Heart right ventricle (tissue), 16 donors: ENCODE measurements at regions of chr18 and their contacts with region 1.

Region 1: GRCh38 chr18:76405681-76406356 is 89.2 kb downstream of the ZNF516 start:
- DNase-seq: peak in 1 of 2 donors; percentile 57
- ATAC-seq: peak in 4 of 8 donors; percentile 29 to 54 (median 38)
- H3K4me3 ChIP-seq: no peak overlapping the region
- H3K27ac ChIP-seq: no peak overlapping the region
- H3K4me1 ChIP-seq: peaks cover 0 to 32% (median 9%) of the 10 kb centered on the region in 9 donors
- H3K27me3 ChIP-seq: no peaks in the 10 kb centered on the region
- CTCF ChIP-seq: peak; percentile 5 to 62 (median 43)

Region 2: GRCh38 chr18:76620321-76621170 is 214.7 kb after region 1 on chr18:
- intact Hi-C with region 1: loop called in 1 of 10 experiments (anchors 10 kb)
- DNase-seq: peak; percentile 69
- ATAC-seq: peak; percentile 81 to 91 (median 87)
- H3K4me3 ChIP-seq: peak overlapping the region; percentile 1 to 58 (median 50)
- H3K27ac ChIP-seq: peak overlapping the region in 8 of 10 donors; percentile 2 to 83 (median 64)
- H3K4me1 ChIP-seq: peaks cover 0 to 34% (median 16%) of the 10 kb centered on the region in 9 donors
- H3K27me3 ChIP-seq: peaks cover 0 to 10% (median 0%) of the 10 kb centered on the region in 7 donors
- CTCF ChIP-seq: peak; percentile 25 to 76 (median 68)